Activated naive CD8-positive, alpha-beta T cell treated with anti-CD3 and anti-CD28 coated beads, Interleukin-2, amount 10 ng/mL, durations not matched to agents 7 days and 5 days (primary cell): ENCODE measurements at regions of chr10 and their contacts with region 1.

Region 1: GRCh38 chr10:70602665-70603448 is at the start of gene PRF1:
- DNase-seq: peak; percentile 91
- ATAC-seq: peak; percentile 98
- H3K4me3 Mint-ChIP-seq: peak within 1 kb of the TSS; percentile 99
- H3K27ac Mint-ChIP-seq: peak within 1 kb of the TSS; percentile 100
- H3K4me1 Mint-ChIP-seq: peaks cover 38% of the 10 kb centered on the region
- H3K27me3 Mint-ChIP-seq: no peaks in the 10 kb centered on the region
- total RNA-seq, gene PRF1: 165 to 170 TPM

Region 2: DNA sequence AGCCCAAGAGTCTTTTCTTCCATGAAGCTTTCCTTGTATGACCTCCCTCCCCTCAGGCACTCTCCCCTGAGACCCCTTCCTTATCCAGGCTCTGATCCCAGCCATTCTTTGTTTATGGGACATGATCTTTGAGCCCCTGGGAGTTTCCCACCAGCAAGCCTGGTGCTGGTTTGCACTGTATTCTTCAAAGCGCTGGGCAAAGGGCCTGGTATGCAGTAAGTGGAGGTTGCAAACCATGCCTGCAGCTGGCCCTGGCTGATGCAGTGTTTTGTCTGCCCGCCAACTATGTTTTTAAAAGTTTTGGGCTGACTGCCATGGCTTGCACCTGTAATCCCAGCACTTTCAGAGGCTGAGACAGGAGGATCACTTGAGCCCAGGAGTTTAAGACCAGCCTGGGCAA is 154.6 kb before region 1 on chr10:
- POLR2A ChIA-PET with region 1: no interaction called
- DNase-seq: no peak
- ATAC-seq: no peak
- H3K4me3 Mint-ChIP-seq: no peak overlapping the region
- H3K27ac Mint-ChIP-seq: no peak overlapping the region
- H3K4me1 Mint-ChIP-seq: no peaks in the 10 kb centered on the region
- H3K27me3 Mint-ChIP-seq: peaks cover 13% of the 10 kb centered on the region

Region 3: GRCh38 chr10:70466951-70467350 is 135.9 kb before region 1 on chr10:
- POLR2A ChIA-PET with region 1: no interaction called
- DNase-seq: no peak
- ATAC-seq: no peak
- H3K4me3 Mint-ChIP-seq: no peak overlapping the region
- H3K27ac Mint-ChIP-seq: no peak overlapping the region
- H3K4me1 Mint-ChIP-seq: peaks cover 4% of the 10 kb centered on the region
- H3K27me3 Mint-ChIP-seq: peaks cover 23% of the 10 kb centered on the region

Region 4: DNA sequence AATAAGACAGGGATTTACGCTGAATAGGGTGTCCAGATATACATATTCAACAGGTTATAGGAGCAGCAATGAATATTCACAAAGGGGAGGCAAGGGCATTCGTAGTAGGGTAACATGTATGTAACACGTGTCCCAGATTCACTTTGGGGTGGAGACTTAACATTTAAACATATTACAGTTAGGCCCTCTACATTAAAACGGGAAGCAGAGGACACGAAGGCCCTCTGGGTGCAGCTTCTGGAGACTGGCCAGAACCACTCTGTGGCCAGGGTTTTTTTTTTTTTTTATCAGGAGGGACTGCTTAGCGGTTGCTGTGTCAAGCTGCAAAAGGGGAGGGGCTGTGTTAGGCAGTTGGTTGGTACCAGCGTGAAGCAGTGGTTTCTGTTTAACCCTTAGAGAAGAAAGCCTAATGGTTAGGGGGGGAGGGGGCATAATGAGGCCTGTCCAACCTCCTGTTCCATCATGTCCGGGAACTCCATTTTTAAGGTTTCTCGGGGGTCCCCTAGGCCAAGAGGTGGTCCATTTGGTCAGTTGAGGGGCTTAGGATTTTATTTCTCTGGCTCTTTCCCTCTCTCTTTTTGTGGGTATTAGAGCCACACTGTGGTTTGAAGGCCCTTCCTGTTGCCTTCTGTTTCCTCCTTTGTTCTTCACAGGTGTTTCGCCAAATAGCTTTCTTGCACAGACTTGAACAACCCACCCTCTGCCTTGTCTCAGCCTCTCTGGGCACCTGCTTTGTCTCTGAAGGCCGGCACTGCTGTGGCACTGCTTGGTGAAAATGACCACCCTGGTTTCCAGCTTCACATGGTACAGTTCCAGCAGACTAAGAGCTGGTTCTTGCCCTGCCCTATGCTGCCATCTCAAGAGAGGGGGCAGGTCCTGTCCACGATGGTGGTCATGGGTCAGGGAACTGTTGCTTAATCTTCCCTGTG is 26.7 kb before region 1 on chr10:
- POLR2A ChIA-PET with region 1: interaction called, 33 read pairs
- DNase-seq: no peak
- ATAC-seq: peak; percentile 8
- H3K4me3 Mint-ChIP-seq: peak overlapping the region; percentile 69
- H3K27ac Mint-ChIP-seq: peak overlapping the region; percentile 74
- H3K4me1 Mint-ChIP-seq: peaks cover 60% of the 10 kb centered on the region
- H3K27me3 Mint-ChIP-seq: peaks cover 5% of the 10 kb centered on the region

Region 5: DNA sequence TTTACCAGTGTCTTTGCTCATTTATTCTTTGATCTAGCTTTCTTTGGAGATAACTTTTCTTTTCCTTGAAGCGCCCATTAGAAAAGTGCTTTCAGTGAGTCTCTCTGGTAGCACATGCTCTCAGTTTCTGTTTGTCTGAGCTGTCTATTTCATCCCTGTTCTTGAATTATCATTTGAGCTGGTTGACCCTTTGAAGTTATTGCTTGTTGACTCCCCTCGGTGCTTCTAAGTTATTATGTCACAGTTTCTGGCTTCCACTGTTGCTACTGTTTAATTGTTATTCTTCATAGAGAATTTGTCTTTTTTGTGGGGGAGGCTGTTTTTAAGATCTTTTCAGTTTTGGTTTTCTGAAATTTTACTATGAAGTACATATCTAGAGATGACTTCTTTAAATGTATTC is 11.1 kb after region 1 on chr10:
- POLR2A ChIA-PET with region 1: interaction called, 19 read pairs
- DNase-seq: no peak
- ATAC-seq: no peak
- H3K4me3 Mint-ChIP-seq: peak overlapping the region; percentile 5
- H3K27ac Mint-ChIP-seq: peak overlapping the region; percentile 56
- H3K4me1 Mint-ChIP-seq: peaks cover 52% of the 10 kb centered on the region
- H3K27me3 Mint-ChIP-seq: no peaks in the 10 kb centered on the region

Region 6: GRCh38 chr10:70619271-70620019 is 16.6 kb after region 1 on chr10:
- POLR2A ChIA-PET with region 1: interaction called, 19 read pairs
- DNase-seq: no peak
- ATAC-seq: no peak
- H3K4me3 Mint-ChIP-seq: no peak overlapping the region
- H3K27ac Mint-ChIP-seq: peak overlapping the region; percentile 74
- H3K4me1 Mint-ChIP-seq: peaks cover 32% of the 10 kb centered on the region
- H3K27me3 Mint-ChIP-seq: no peaks in the 10 kb centered on the region

Region 7: GRCh38 chr10:70715853-70716795 is 113.3 kb after region 1 on chr10:
- POLR2A ChIA-PET with region 1: no interaction called
- DNase-seq: no peak
- ATAC-seq: no peak
- H3K4me3 Mint-ChIP-seq: no peak overlapping the region
- H3K27ac Mint-ChIP-seq: no peak overlapping the region
- H3K4me1 Mint-ChIP-seq: peaks cover 1% of the 10 kb centered on the region
- H3K27me3 Mint-ChIP-seq: peaks cover 2% of the 10 kb centered on the region